ENCODE measurements at regions of chr13 and their contacts with region 1.

Region 1: GRCh38 chr13:30792285-30793000 is 57.1 kb downstream of the ALOX5AP start:
- DNase-seq: peak; percentile 94
- ATAC-seq: peak; percentile 95
- H3K4me3 ChIP-seq: no peak overlapping the region
- H3K27ac ChIP-seq: peak overlapping the region; percentile 79
- H3K4me1 ChIP-seq: peaks cover 31% of the 10 kb centered on the region
- H3K27me3 ChIP-seq: no peaks in the 10 kb centered on the region
- CTCF ChIP-seq: peak; percentile 64
- POLR2A ChIP-seq: no peak
- RAD21 ChIP-seq: peak; percentile 66

Region 2: DNA sequence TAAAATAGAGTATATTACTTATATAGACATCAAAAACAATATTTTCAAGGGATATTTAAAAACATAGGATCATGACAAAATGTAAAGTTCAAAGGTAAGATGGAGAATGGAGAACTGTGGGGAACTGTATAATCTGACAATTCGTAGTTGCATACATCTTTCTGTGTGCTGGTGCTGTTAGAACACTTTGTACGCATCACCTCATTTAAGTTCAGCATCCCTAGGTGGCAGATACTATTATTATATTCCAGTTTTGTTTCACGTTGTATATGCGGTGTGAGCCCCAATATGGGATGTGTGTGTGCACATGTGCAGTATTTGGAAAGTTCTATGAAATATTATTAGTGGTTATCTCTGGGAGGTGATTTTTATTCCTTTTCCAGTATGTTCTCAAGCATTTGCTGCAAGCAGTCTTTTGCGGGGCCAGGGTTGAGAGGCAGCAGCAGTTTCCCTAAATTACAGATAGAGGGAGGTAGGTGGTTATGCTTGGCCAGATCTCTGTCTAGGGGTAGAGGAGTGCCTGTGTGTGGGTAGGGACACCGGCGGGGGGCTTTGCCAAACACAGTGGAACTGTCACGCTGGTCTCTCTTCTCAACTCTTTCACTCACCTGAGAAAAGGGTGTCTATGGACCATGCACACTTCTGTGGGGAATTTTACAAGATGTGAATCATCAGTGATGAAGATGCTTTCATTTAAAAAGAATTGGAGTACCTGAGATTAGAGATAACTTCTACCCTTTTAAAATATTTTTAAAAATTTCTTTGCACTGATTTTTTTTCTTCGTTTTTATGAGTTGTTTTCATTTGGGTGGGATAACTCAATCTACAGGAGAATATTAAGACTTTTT is 112.7 kb before region 1 on chr13:
- CTCF ChIA-PET with region 1: interaction called, 4 read pairs
- POLR2A ChIA-PET with region 1: no interaction called
- dilution Hi-C with region 1: no loop called
- in situ Hi-C with region 1: loop called (anchors 5 kb)
- intact Hi-C with region 1: loop called (anchors 2 kb)
- DNase-seq: peak; percentile 41
- ATAC-seq: peak; percentile 75
- H3K4me3 ChIP-seq: no peak overlapping the region
- H3K27ac ChIP-seq: no peak overlapping the region
- H3K4me1 ChIP-seq: peaks cover 11% of the 10 kb centered on the region
- H3K27me3 ChIP-seq: no peaks in the 10 kb centered on the region
- CTCF ChIP-seq: peak; percentile 65
- POLR2A ChIP-seq: no peak
- RAD21 ChIP-seq: peak; percentile 70

Region 3: DNA sequence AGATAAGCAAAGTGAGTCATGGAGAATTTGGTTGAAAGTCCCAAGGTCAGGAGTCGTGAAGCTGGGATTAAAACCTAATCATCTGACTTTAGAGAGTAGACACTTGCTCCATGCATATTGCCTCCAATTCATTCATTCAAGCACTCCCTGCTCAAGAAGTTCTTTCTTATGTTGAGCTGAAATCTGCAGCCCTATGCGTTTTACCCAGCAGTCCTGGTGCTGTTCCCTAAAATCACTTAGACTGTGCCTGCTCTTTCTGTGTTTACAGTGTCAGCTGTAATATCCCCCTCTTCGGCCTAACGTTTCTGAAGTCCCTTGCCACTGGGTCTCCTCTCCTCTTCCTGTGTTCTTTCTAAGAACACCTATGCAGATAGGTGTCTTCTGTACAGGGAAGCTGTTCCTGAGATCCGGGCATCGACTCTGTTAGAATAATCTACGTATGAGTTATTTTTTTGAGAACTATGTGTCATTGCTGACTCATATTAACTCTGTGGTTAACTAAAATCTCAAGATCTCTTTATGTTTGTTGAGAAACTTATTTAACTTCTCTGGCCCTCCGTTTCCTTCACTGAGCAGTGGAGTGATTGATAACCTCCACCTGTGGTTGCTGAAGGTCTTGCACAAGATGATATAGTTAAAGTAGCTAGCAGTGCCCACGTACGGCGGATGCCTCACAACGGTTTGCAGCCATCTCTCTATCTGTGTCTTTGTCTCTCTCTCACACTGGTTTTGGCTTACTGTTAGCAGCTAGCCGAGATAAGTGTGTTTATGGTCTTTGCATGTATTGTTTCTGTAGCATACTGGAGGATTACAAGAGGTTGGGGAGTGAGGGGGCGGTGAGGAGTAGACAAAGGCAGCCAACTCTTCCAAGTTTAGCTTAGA is 52.4 kb before region 1 on chr13:
- CTCF ChIA-PET with region 1: interaction called, 3 read pairs
- POLR2A ChIA-PET with region 1: no interaction called
- dilution Hi-C with region 1: no loop called
- in situ Hi-C with region 1: no loop called
- intact Hi-C with region 1: loop called (anchors 5 kb)
- DNase-seq: peak; percentile 95
- ATAC-seq: peak; percentile 47
- H3K4me3 ChIP-seq: peak overlapping the region; percentile 1; the same call in 1 of the 2 replicates
- H3K27ac ChIP-seq: peak overlapping the region; percentile 63
- H3K4me1 ChIP-seq: peaks cover 27% of the 10 kb centered on the region
- H3K27me3 ChIP-seq: peaks cover 9% of the 10 kb centered on the region
- CTCF ChIP-seq: no peak
- POLR2A ChIP-seq: no peak
- RAD21 ChIP-seq: no peak

Measured in IMR-90 (cell line).